A549 (cell line): ENCODE measurements at regions of chr20 and their contacts with region 1.

Region 1: DNA sequence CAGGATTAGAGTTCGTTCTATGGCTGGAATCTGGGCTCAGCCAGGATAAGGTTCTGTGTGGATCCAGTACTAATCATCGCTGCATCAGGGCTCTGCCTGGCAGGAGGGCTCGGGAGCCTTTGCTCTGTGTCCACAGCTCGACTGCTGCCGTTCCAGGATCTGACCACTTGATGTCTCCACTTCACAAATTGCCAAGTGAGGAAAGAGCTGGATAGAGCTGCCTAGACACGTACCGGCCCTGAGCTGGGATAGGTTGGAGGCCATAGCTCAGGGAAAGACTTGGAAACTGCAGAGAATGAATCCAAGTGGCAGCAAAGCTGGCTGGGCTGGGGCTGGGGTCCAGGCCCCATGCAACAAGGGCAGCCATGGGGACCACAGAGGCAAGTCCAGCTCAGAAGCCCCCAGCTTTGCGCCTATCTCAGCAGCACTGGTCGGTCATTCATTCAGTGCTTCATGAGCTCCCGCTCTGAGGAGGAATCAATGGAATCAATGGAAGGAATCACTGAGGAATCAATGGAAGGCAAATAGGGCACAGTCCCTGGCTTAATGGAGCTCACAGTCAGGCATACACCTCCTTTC is 38.0 kb upstream of the TOP1 start:
- DNase-seq: peak; percentile 85 to 91
- ATAC-seq: peak; percentile 99 to 100
- H3K4me3 ChIP-seq: no peak overlapping the region
- H3K27ac ChIP-seq: peak overlapping the region; percentile 62 to 84; a peak in 5 of 6 replicates
- H3K4me1 ChIP-seq: no peaks in the 10 kb centered on the region
- CTCF ChIP-seq: peak; percentile 85
- EP300 ChIP-seq: no peak
- POLR2A ChIP-seq: no peak
- RAD21 ChIP-seq: peak; percentile 88 to 89

Region 2: GRCh38 chr20:41011551-41012067 is 21.0 kb after region 1 on chr20:
- CTCF ChIA-PET with region 1: interaction called, 27 read pairs
- POLR2A ChIA-PET with region 1: no interaction called
- DNase-seq: no peak
- ATAC-seq: no peak
- H3K4me3 ChIP-seq: no peak overlapping the region
- H3K27ac ChIP-seq: peak overlapping the region; percentile 34 to 38; a peak in 3 of 6 replicates
- H3K4me1 ChIP-seq: peaks cover 25% of the 10 kb centered on the region
- CTCF ChIP-seq: no peak
- EP300 ChIP-seq: no peak
- POLR2A ChIP-seq: no peak
- RAD21 ChIP-seq: no peak

Region 3: GRCh38 chr20:41034239-41034638 is 43.6 kb after region 1 on chr20:
- CTCF ChIA-PET with region 1: interaction called, 28 read pairs
- POLR2A ChIA-PET with region 1: no interaction called
- DNase-seq: no peak
- ATAC-seq: no peak
- H3K4me3 ChIP-seq: no peak overlapping the region
- H3K27ac ChIP-seq: no peak overlapping the region
- H3K4me1 ChIP-seq: peaks cover 57% of the 10 kb centered on the region
- CTCF ChIP-seq: no peak
- EP300 ChIP-seq: no peak
- POLR2A ChIP-seq: no peak
- RAD21 ChIP-seq: no peak

Region 4: GRCh38 chr20:41072190-41072863 is 81.7 kb after region 1 on chr20:
- CTCF ChIA-PET with region 1: interaction called, 29 read pairs
- POLR2A ChIA-PET with region 1: no interaction called
- DNase-seq: no peak
- ATAC-seq: peak in 1 of 2 experiments; percentile 70; a peak in 3 of 6 replicates
- H3K4me3 ChIP-seq: no peak overlapping the region
- H3K27ac ChIP-seq: peak overlapping the region in 1 of 2 experiments; percentile 42; a peak in 1 of 6 replicates
- H3K4me1 ChIP-seq: peaks cover 33% of the 10 kb centered on the region
- CTCF ChIP-seq: no peak
- EP300 ChIP-seq: no peak
- POLR2A ChIP-seq: no peak
- RAD21 ChIP-seq: no peak

Region 5: GRCh38 chr20:41136680-41137613 is 146.3 kb after region 1 on chr20 and contains the start of gene PLCG1:
- CTCF ChIA-PET with region 1: interaction called, 10 read pairs
- POLR2A ChIA-PET with region 1: interaction called, 3 read pairs
- DNase-seq: peak; percentile 83 to 91
- ATAC-seq: peak; percentile 77 to 86
- H3K4me3 ChIP-seq: peak within 1 kb of the TSS; percentile 89
- H3K27ac ChIP-seq: peak within 1 kb of the TSS; percentile 86 to 91
- H3K4me1 ChIP-seq: peaks cover 7% of the 10 kb centered on the region
- CTCF ChIP-seq: no peak
- EP300 ChIP-seq: no peak
- POLR2A ChIP-seq: peak; percentile 57
- RAD21 ChIP-seq: no peak
- polyA plus RNA-seq, gene PLCG1: 22.0 and 37.1 TPM in 2 replicates